AG04449 (cell line): ENCODE measurements at regions of chr17 and their contacts with region 1.

Region 1: DNA sequence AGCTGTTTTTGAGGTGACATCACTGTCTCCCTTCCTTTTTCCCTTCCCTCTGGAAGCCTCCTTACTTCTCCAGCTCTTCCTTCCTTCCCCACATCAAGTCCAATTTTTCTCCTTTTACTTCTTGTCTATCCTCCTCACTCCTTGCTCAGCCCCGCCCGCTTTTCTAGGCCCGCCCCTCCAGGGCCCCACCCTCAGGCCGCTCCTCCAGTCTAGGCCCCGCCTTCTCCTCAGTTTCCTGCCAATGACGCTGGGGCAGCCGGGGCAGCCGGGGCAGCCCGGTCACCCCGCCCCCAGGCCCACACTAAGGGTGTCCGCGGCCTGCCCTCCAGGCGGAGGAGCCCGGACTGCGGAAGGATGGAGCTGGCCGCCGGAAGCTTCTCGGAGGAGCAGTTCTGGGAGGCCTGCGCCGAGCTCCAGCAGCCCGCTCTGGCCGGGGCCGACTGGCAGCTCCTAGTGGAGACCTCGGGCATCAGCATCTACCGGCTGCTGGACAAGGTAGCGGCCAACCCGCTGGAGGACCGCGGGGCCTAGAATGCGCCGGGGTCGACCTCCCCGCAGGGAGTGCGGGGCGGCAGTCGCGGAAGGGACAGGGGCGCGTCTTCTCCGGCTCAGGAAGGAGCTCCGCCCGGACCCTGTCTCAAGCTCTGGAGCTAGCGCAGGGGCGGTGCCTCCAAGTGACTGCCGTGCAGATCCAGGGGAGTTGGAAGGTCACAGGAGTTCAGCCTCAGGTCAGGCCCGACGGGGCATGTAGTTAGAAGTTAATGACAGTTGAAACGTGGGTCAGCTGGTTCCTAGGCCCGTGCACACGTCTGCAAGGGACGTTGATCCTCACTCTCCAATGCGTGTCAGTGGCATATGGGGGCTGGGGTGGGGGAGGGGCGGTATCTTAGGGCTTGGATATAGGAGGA is at the start of gene PCTP:
- DNase-seq: no peak
- H3K4me3 ChIP-seq: peak within 1 kb of the TSS; percentile 84
- CTCF ChIP-seq: peak; percentile 70

Region 2: GRCh38 chr17:55735731-55736405 is 15.1 kb before region 1 on chr17:
- CTCF ChIA-PET with region 1: interaction called, 52 read pairs
- POLR2A ChIA-PET with region 1: interaction called, 13 read pairs
- DNase-seq: no peak
- H3K4me3 ChIP-seq: no peak overlapping the region
- CTCF ChIP-seq: peak; percentile 54

Region 3: DNA sequence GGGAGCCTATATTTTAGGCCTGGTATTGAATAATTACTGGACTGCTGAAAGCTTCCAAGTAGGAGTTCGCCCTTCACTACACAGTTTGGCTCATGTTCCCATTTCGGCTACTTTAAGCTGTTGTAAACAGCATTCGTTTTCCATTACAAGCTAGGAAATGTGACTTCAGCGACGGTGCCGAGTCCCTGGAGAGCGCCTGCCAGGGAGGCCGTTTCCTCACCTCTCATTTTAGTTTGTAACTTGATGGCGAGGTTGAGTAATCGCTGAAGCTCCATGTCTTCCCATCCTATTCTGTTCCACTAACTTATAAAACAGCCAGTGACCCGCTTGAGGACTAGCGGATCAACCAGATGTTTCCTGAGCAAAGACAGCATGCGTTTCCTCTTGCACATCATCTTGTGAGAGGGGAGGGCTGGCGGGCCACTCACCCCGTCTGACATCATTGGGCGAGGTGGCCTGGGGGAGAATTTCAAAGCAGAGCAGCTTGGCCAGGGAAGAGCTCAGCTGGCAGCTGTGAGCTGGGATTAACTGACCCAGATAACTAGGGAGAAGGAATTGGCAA is 32.8 kb after region 1 on chr17:
- CTCF ChIA-PET with region 1: no interaction called
- POLR2A ChIA-PET with region 1: no interaction called
- DNase-seq: no peak
- H3K4me3 ChIP-seq: no peak overlapping the region
- CTCF ChIP-seq: no peak

Region 4: DNA sequence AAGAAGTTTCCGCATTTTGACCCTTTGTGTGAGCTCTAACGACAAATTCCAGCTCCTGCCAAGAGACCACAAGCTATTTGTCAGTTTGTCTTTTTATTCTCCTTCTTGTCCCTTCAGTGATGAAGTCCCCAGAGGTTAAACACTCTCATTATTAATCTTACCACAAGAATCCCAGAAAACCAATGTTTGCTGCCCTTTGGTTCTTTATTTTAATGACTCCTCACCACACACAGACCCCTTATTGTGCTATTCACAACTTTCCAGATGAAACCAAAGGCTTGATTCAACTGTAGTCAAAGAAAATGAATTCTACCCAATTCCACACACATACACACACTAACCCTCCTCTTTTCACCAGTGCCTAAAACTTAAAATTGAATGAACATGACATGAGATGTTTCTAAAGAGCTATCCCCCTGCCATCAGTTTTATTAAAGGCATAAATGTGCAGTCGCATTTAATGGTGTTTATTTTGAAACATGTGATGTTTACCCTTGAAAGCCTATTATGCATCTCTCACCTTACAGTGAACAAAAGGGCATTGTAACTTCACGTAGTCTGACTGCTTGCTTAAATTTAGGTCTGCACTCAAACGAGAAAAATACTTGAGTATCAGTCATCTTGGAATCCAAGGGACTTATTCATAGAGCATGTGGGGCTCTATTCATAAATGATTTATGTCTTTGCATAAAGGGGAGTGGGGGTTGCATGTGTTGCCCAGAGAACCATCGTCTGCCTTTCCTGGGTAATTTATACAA is 43.9 kb after region 1 on chr17:
- CTCF ChIA-PET with region 1: no interaction called
- POLR2A ChIA-PET with region 1: no interaction called
- DNase-seq: no peak
- H3K4me3 ChIP-seq: no peak overlapping the region
- CTCF ChIP-seq: no peak